MCF 10A (cell line): ENCODE measurements at regions of chr6 and their contacts with region 1.

Region 1: DNA sequence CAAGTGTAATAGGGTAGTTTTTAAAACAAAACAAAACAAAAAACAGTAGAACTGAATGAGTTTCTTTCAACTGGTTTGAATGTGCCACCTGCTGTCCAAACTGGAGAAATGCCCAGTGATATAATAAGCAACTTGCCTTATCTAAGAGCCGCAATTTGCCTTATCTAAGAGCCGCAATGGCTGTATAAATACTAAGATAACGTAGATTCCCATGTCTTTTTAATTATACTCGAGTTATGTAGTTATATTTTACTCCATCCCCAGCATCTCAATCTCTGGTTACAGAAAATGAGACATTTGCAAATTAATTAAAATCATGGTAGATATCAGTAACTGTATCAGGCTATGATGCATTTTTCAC is 67.2 kb downstream of the RPP40 start:
- DNase-seq: peak; percentile 34
- H3K4me3 Mint-ChIP-seq: no peak overlapping the region
- H3K27ac Mint-ChIP-seq: no peak overlapping the region
- H3K4me1 Mint-ChIP-seq: peaks cover 18% of the 10 kb centered on the region
- H3K27me3 Mint-ChIP-seq: no peaks in the 10 kb centered on the region
- CTCF ChIP-seq: peak; percentile 56

Region 2: GRCh38 chr6:4805553-4806336 is 130.9 kb before region 1 on chr6:
- CTCF ChIA-PET with region 1: interaction called, 3 read pairs
- POLR2A ChIA-PET with region 1: no interaction called
- intact Hi-C with region 1: loop called (anchors 10 kb)
- DNase-seq: peak; percentile 63
- H3K4me3 Mint-ChIP-seq: no peak overlapping the region
- H3K27ac Mint-ChIP-seq: no peak overlapping the region
- H3K4me1 Mint-ChIP-seq: peaks cover 30% of the 10 kb centered on the region
- H3K27me3 Mint-ChIP-seq: no peaks in the 10 kb centered on the region
- CTCF ChIP-seq: peak; percentile 62

Region 3: DNA sequence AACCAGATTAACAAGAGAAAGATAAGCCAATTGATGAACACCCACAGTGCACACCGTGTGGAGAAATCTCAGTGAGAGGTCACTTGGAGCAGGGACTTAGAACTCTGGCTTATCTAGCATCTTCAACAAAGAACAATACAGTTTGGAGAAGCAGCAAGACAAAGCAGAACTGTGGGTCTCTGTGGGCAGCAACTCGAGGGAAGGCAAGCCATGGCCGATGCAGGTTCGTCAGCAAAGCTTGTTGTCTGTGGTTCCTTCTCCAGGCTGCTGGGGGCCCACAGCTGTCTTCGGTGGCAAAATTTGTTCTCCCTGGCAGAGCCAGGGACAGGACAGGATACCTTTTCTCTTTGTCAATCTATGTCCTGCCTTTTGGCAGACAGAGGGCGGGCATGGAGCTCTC is 45.1 kb after region 1 on chr6:
- CTCF ChIA-PET with region 1: no interaction called
- POLR2A ChIA-PET with region 1: no interaction called
- intact Hi-C with region 1: no loop called
- DNase-seq: no peak
- H3K4me3 Mint-ChIP-seq: no peak overlapping the region
- H3K27ac Mint-ChIP-seq: no peak overlapping the region
- H3K4me1 Mint-ChIP-seq: peaks cover 6% of the 10 kb centered on the region
- H3K27me3 Mint-ChIP-seq: no peaks in the 10 kb centered on the region
- CTCF ChIP-seq: no peak